Calu3 (cell line): ENCODE measurements at regions of chr1 and their contacts with region 1.

Region 1: GRCh38 chr1:112666946-112667345 is 7.5 kb upstream of the MOV10 start:
- DNase-seq: no peak
- H3K4me3 Mint-ChIP-seq: no peak overlapping the region
- H3K27ac Mint-ChIP-seq: no peak overlapping the region
- H3K4me1 Mint-ChIP-seq: no peaks in the 10 kb centered on the region
- H3K27me3 Mint-ChIP-seq: no peaks in the 10 kb centered on the region
- CTCF ChIP-seq: no peak

Region 2: DNA sequence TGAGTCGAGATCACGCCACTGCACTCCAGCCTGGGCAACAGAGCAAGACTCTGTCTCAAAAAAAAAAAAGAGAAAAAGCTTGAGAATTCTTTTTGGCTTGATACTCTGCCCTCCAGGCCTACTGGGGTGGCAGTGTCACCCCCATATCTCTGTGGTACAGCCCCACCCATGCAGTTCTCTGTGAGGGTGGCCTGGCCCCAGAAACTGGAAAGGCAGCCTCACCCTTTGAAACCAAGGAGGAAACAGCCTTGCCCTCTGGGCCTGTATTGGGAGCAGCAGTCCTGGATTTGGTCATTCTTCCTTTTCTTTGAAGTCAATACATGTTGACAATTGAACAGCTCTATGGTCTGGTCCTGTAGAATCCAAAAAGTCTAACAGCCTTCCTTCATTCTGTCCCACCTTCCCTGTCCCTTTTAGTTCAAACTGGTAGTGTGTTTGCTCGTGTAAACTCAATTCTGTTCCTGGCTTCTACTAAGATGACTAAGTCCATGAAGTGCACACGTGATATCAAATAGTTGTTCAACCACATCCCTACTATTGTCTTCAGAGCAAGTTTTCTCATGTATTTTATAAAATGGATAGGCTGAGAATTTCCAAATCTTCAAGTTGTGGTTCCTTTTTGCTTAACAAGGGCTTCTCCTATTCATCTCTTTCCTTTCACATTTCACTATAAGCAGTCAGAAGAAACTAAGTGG is 61.2 kb before region 1 on chr1:
- CTCF ChIA-PET with region 1: no interaction called
- intact Hi-C with region 1: loop called (anchors 10 kb)
- DNase-seq: no peak
- H3K4me3 Mint-ChIP-seq: no peak overlapping the region
- H3K27ac Mint-ChIP-seq: peak overlapping the region; percentile 12
- H3K4me1 Mint-ChIP-seq: peaks cover 13% of the 10 kb centered on the region
- H3K27me3 Mint-ChIP-seq: no peaks in the 10 kb centered on the region
- CTCF ChIP-seq: no peak

Region 3: GRCh38 chr1:112715264-112716053 is 48.5 kb after region 1 on chr1 and contains the start of gene PPM1J:
- CTCF ChIA-PET with region 1: no interaction called
- intact Hi-C with region 1: no loop called
- DNase-seq: peak; percentile 97
- H3K4me3 Mint-ChIP-seq: peak within 1 kb of the TSS; percentile 71
- H3K27ac Mint-ChIP-seq: no peak within 1 kb of the TSS
- H3K4me1 Mint-ChIP-seq: peaks cover 7% of the 10 kb centered on the region
- H3K27me3 Mint-ChIP-seq: peaks cover 21% of the 10 kb centered on the region
- CTCF ChIP-seq: no peak
- total RNA-seq, gene PPM1J: 1.3 and 2.2 TPM in 2 replicates

Region 4: DNA sequence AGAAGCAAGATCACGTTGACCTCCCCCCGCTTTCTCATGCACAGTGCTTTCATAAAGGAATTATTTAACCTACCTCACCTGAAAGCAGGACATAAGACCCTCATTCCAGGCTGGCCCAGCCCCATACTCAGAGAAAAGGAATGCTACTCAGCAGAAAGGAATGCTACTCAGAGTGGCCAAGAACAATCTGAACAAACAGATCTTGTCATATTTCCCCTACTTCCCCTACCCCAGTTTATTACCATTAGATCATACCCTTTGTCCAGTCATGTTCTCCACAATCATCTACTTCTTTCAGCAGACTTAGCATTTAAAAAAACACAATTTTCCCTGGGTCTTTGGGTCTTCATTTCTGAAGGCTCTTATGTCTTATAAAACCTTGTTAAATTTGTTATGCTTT is 199.2 kb after region 1 on chr1:
- CTCF ChIA-PET with region 1: no interaction called
- intact Hi-C with region 1: no loop called
- DNase-seq: no peak
- H3K4me3 Mint-ChIP-seq: no peak overlapping the region
- H3K27ac Mint-ChIP-seq: peak overlapping the region; percentile 16
- H3K4me1 Mint-ChIP-seq: peaks cover 33% of the 10 kb centered on the region
- H3K27me3 Mint-ChIP-seq: no peaks in the 10 kb centered on the region
- CTCF ChIP-seq: no peak